Activated T-helper 2 cell treated with anti-CD3 and anti-CD28 coated beads, Interferon-gamma antibody, Interleukin-2, Interleukin-4, amounts not matched to agents 10 μg/mL and 5 μg/mL and 100 μg/mL, durations not matched to agents 14 hours and 24 hours and 36 hours (primary cell): ENCODE measurements at regions of chr9 and their contacts with region 1.

Region 1: GRCh38 chr9:122264360-122265148 is at the starts of genes MRRF and RBM18:
- DNase-seq: peak; percentile 89
- H3K4me3 Mint-ChIP-seq: peak within 1 kb of the TSS; percentile 97
- H3K27ac Mint-ChIP-seq: peak within 1 kb of the TSS; percentile 99
- H3K4me1 Mint-ChIP-seq: peaks cover 36% of the 10 kb centered on the region
- H3K27me3 Mint-ChIP-seq: no peaks in the 10 kb centered on the region
- total RNA-seq, gene MRRF: 57.0 and 58.8 TPM in 2 replicates
- total RNA-seq, gene RBM18: 19.4 and 21.9 TPM in 2 replicates

Region 2: GRCh38 chr9:122092611-122093506 is 171.7 kb before region 1 on chr9 and contains the start of gene TTLL11:
- intact Hi-C with region 1: loop called (anchors 2 kb)
- DNase-seq: peak; percentile 93
- H3K4me3 Mint-ChIP-seq: peak within 1 kb of the TSS; percentile 87
- H3K27ac Mint-ChIP-seq: peak within 1 kb of the TSS; percentile 37
- H3K4me1 Mint-ChIP-seq: peaks cover 19% of the 10 kb centered on the region
- H3K27me3 Mint-ChIP-seq: peaks cover 17% of the 10 kb centered on the region
- total RNA-seq, gene TTLL11: 2.2 and 2.4 TPM in 2 replicates

Region 3: GRCh38 chr9:122248448-122248915 is 16.1 kb before region 1 on chr9:
- intact Hi-C with region 1: no loop called
- DNase-seq: no peak
- H3K4me3 Mint-ChIP-seq: no peak overlapping the region
- H3K27ac Mint-ChIP-seq: no peak overlapping the region
- H3K4me1 Mint-ChIP-seq: peaks cover 2% of the 10 kb centered on the region
- H3K27me3 Mint-ChIP-seq: no peaks in the 10 kb centered on the region

Region 4: DNA sequence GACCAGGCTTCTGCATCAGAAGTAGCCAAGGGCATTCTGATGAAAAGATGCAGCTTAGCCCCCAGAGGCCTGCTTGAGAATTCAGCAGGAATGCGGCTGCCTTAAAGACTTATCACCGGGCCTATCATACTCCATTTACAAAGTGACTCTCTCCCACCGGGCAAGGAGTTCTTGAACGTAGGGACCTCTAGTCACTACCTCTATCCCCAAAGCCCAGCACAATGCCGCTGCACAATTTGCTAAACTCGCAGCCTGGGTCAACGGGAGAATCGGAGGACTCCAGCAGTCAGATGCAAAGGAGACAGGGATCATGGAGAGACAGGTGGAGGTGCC is 563.2 kb after region 1 on chr9:
- intact Hi-C with region 1: loop called (anchors 2 kb)
- DNase-seq: no peak
- H3K4me3 Mint-ChIP-seq: peak overlapping the region; percentile 95
- H3K27ac Mint-ChIP-seq: peak overlapping the region; percentile 91
- H3K4me1 Mint-ChIP-seq: peaks cover 19% of the 10 kb centered on the region
- H3K27me3 Mint-ChIP-seq: no peaks in the 10 kb centered on the region